Dorsolateral prefrontal cortex (tissue), 120 donors: ENCODE measurements at regions of chr5 and their contacts with region 1.

Region 1: DNA sequence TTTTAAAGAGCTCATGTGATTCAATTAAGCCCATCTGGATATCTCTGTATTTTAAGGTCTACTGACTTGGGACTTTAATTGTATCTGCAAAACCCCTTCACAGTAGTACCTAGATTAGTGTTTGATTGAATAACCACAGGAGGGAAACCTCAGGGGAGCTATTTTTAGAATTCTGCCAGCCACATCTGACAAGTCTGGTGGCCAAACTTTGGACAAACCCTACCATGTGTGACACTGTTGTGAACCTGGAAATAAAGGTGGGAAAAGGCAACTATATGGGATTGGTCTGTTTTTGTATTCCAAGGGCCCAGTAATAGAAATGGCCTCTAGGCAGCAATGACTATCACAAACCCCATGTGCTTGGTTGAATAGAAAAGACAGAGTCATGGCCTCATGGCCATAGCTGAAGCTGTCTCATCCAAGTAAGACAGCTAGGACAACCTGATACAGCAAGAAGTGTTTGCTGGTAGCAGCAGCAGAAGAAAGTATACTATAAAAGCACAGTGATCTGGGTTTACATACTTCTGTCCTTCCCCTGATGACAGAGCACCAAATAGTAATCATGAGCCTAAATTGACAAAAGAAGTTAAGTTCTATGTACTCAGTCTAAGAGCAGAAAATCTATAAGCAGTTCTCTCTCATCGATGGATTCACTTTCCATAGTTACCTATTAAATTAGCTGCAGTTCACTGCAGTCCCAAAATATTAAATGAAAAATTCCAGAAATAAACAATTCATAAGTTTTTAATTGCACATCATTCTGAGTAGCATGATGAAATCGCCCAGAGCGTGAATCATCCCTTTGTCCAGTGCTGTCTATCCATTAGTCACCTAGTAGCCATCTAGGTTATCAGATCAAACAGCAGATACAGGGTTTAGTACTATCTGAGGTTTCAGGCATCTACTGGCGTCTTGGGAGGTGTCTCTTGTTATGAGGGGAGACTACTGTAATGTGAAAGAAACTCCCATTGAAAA is 189.8 kb downstream of the ARHGAP26 start:
- DNase-seq: no peak
- H3K4me3 ChIP-seq: no peak overlapping the region
- H3K27ac ChIP-seq: no peak overlapping the region
- H3K27me3 ChIP-seq: no peaks in the 10 kb centered on the region
- CTCF ChIP-seq: no peak

Region 2: DNA sequence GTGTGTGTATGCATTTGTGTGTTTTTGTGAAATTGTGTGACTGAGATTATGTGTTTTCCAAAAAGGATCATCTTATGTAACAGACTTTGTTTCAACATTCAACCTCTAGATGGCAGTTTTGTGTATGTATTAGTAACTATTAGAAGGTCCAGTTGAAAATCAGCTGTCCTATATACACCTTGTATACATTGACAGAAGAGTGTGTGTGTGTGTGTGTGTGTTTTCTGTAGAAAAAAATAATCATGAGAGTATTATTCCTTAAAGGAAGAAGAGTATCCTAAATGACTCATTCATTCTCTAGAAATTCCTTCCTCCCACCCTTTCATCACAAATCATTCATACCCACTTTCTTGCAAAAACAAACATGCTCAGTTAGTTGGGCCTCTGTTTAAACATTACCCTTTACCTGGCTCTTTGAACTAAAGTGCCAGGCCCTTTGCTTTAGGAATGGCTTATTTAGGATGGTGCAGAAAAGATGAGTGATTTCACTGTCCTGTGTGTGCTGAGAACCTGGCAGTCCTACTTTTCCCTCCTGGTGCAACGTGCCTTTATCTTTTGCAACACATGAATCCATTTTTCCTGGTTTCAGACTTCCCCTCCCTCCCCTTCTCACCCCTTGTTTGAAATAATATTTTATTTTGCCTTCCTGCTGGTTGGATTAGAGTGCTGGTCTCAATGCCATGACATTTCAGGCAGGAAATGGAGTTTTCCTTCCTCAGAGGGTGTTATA is 37.6 kb before region 1 on chr5:
- intact Hi-C with region 1: loop called in 1 of 2 experiments (anchors 5 kb)
- DNase-seq: no peak
- H3K4me3 ChIP-seq: no peak overlapping the region
- H3K27ac ChIP-seq: peak overlapping the region in 31 of 59 donors; percentile 2 to 78 (median 37)
- H3K27me3 ChIP-seq: no peaks in the 10 kb centered on the region
- CTCF ChIP-seq: peak; percentile 37 to 84 (median 68)

Region 3: GRCh38 chr5:144304688-144305087 is 1344.7 kb after region 1 on chr5:
- intact Hi-C with region 1: no loop called
- DNase-seq: no peak
- H3K4me3 ChIP-seq: no peak overlapping the region
- H3K27ac ChIP-seq: no peak overlapping the region
- H3K27me3 ChIP-seq: no peaks in the 10 kb centered on the region
- CTCF ChIP-seq: no peak